ENCODE measurements at regions of chr19 and their contacts with region 1.

Region 1: DNA sequence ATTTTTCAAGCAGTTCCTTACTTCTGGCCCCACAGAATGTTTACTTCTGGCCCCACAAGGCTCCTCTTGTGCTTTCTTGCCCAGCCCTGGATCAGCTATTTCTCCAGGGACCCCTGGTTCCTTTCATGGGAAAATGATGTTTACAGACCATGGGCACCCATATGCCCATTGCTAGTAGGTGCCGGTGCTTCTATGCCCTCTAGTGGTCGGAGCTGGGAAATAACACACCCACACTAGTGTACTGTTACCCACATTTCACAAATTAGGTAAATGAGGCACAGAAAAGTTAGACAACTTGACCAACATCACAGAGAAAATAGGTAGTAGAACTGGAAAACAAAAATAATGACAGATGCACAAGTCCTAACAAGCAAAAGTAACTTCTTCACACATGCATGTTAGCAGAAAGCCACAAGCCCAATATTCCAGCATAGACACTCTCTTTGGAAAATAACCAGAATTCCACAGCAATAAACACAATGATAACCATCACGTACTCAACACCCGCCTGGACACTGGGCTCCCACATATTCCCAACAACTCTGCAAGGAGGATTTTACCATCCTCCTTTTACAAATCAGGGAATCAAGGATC is 1.3 kb upstream of the CEACAM6 start:
- DNase-seq: peak; percentile 30
- H3K4me3 ChIP-seq: no peak overlapping the region
- H3K27ac ChIP-seq: no peak overlapping the region
- H3K4me1 ChIP-seq: no peaks in the 10 kb centered on the region
- H3K27me3 ChIP-seq: peaks cover 0 to 3% of the 10 kb centered on the region in 2 experiments
- CTCF ChIP-seq: peak; percentile 62 to 73
- POLR2A ChIP-seq: no peak

Region 2: GRCh38 chr19:41734617-41735016 is 19.4 kb before region 1 on chr19:
- CTCF ChIA-PET with region 1: interaction called, 13 read pairs
- POLR2A ChIA-PET with region 1: interaction called, 4 read pairs
- dilution Hi-C with region 1: no loop called
- intact Hi-C with region 1: no loop called
- DNase-seq: no peak
- H3K4me3 ChIP-seq: no peak overlapping the region
- H3K27ac ChIP-seq: no peak overlapping the region
- H3K4me1 ChIP-seq: no peaks in the 10 kb centered on the region
- H3K27me3 ChIP-seq: peaks cover 5 to 6% of the 10 kb centered on the region in 2 experiments
- CTCF ChIP-seq: no peak
- POLR2A ChIP-seq: no peak

Region 3: GRCh38 chr19:41785653-41786052 is 31.6 kb after region 1 on chr19:
- CTCF ChIA-PET with region 1: interaction called, 43 read pairs
- POLR2A ChIA-PET with region 1: no interaction called
- dilution Hi-C with region 1: no loop called
- intact Hi-C with region 1: loop called (anchors 1 kb)
- DNase-seq: peak; percentile 66
- H3K4me3 ChIP-seq: no peak overlapping the region
- H3K27ac ChIP-seq: no peak overlapping the region
- H3K4me1 ChIP-seq: no peaks in the 10 kb centered on the region
- H3K27me3 ChIP-seq: peaks cover 2 to 3% of the 10 kb centered on the region in 2 experiments
- CTCF ChIP-seq: peak; percentile 78 to 81
- POLR2A ChIP-seq: no peak

Region 4: GRCh38 chr19:41811036-41811435 is 57.0 kb after region 1 on chr19:
- CTCF ChIA-PET with region 1: interaction called, 10 read pairs
- POLR2A ChIA-PET with region 1: no interaction called
- dilution Hi-C with region 1: no loop called
- intact Hi-C with region 1: no loop called
- DNase-seq: no peak
- H3K4me3 ChIP-seq: no peak overlapping the region
- H3K27ac ChIP-seq: no peak overlapping the region
- H3K4me1 ChIP-seq: no peaks in the 10 kb centered on the region
- H3K27me3 ChIP-seq: no peaks in the 10 kb centered on the region
- CTCF ChIP-seq: no peak
- POLR2A ChIP-seq: no peak